ENCODE measurements at regions of chr17 and their contacts with region 1.

Region 1: GRCh38 chr17:19800571-19800970 is 52.5 kb upstream of the ALDH3A1 start:
- DNase-seq: peak in 6 of 9 donors; percentile 12 to 41 (median 22)
- ATAC-seq: no peak
- H3K4me3 ChIP-seq: no peak overlapping the region
- H3K4me3 Mint-ChIP-seq: no peak overlapping the region
- H3K27ac ChIP-seq: peak overlapping the region; percentile 42
- H3K27ac Mint-ChIP-seq: peak overlapping the region in 8 of 9 donors; percentile 7 to 92 (median 76)
- H3K4me1 ChIP-seq: peaks cover 0 to 14% of the 10 kb centered on the region in 2 donors
- H3K4me1 Mint-ChIP-seq: peaks cover 10 to 29% (median 19%) of the 10 kb centered on the region in 7 donors
- H3K27me3 ChIP-seq: no peaks in the 10 kb centered on the region
- H3K27me3 Mint-ChIP-seq: no peaks in the 10 kb centered on the region

Region 2: GRCh38 chr17:19781488-19782458 is 18.8 kb before region 1 on chr17:
- CTCF ChIA-PET with region 1: no interaction called
- POLR2A ChIA-PET with region 1: no interaction called
- intact Hi-C with region 1: loop called in 1 of 2 experiments (anchors 2 kb)
- DNase-seq: no peak
- ATAC-seq: no peak
- H3K4me3 ChIP-seq: no peak overlapping the region
- H3K4me3 Mint-ChIP-seq: no peak overlapping the region
- H3K27ac ChIP-seq: no peak overlapping the region
- H3K27ac Mint-ChIP-seq: peak overlapping the region in 3 of 9 donors; percentile 14 to 64 (median 28)
- H3K4me1 ChIP-seq: no peaks in the 10 kb centered on the region
- H3K4me1 Mint-ChIP-seq: peaks cover 0 to 2% (median 0%) of the 10 kb centered on the region in 7 donors
- H3K27me3 ChIP-seq: no peaks in the 10 kb centered on the region
- H3K27me3 Mint-ChIP-seq: no peaks in the 10 kb centered on the region